B cell (primary cell): ENCODE measurements at regions of chr19 and their contacts with region 1.

Region 1: DNA sequence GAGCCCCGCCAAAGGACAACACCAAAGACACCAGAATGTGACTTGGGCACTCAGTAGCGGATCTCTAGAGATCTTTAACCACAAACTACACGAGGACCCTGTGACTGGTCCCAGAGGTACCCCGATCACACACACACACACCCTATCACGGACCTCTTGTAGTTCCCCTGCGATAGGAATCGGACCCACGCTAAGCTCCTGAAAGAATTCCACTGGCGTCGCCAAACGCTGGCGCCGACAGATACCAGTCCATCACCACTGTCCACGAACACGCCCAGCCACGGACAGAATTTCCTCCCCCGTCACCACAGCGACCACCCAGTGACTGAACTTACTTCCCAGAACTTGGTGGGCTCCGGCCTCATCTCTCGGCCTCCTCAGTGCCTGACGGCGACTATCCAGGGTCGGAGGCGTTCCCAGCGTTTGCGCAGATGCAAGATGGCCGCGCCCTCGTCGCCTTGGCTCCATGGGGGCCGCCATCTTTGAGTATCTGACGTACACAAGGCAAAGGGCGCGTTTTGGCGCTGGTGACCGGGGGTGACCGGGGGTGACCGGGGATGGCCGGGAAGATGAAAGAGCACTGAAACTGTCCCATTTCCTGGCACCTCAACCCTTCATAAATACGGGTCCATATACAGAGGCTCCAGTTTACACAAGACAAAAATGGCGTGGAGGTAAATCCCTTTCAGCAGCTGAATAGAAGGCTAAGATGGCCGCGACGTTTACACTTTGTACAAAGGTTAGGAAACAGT is at the start of gene ZNF615:
- DNase-seq: peak; percentile 94
- ATAC-seq: peak; percentile 94
- H3K4me3 ChIP-seq: peak within 1 kb of the TSS; percentile 68 to 90 (median 76)
- H3K4me3 Mint-ChIP-seq: peak within 1 kb of the TSS; percentile 92
- H3K27ac ChIP-seq: peak within 1 kb of the TSS; percentile 78 to 88
- H3K27ac Mint-ChIP-seq: peak within 1 kb of the TSS; percentile 98
- H3K4me1 ChIP-seq: peaks cover 9 to 12% of the 10 kb centered on the region in 2 donors
- H3K4me1 Mint-ChIP-seq: peaks cover 17% of the 10 kb centered on the region
- H3K27me3 ChIP-seq: no peaks in the 10 kb centered on the region
- H3K27me3 Mint-ChIP-seq: no peaks in the 10 kb centered on the region
- CTCF ChIP-seq: no peak
- total RNA-seq, gene ZNF615: 16.8 and 24.5 TPM in 2 replicates

Region 2: GRCh38 chr19:51751655-51752054 is 256.3 kb before region 1 on chr19 and contains the start of gene FPR1:
- CTCF ChIA-PET with region 1: no interaction called
- POLR2A ChIA-PET with region 1: no interaction called
- intact Hi-C with region 1: no loop called
- DNase-seq: no peak
- ATAC-seq: peak; percentile 94
- H3K4me3 ChIP-seq: peak within 1 kb of the TSS in 1 of 5 experiments; percentile 85
- H3K4me3 Mint-ChIP-seq: peak within 1 kb of the TSS; percentile 41
- H3K27ac ChIP-seq: no peak within 1 kb of the TSS
- H3K27ac Mint-ChIP-seq: peak within 1 kb of the TSS; percentile 77
- H3K4me1 ChIP-seq: peaks cover 0 to 5% of the 10 kb centered on the region in 2 donors
- H3K4me1 Mint-ChIP-seq: peaks cover 14% of the 10 kb centered on the region
- H3K27me3 ChIP-seq: peaks cover 0 to under 1% (median 0%) of the 10 kb centered on the region in 4 experiments
- H3K27me3 Mint-ChIP-seq: peaks cover 9% of the 10 kb centered on the region
- CTCF ChIP-seq: no peak
- total RNA-seq, gene FPR1: 0.17 TPM in 1 of 2 replicates, not detected in the other

Region 3: GRCh38 chr19:51980121-51980743 is 27.8 kb before region 1 on chr19:
- CTCF ChIA-PET with region 1: no interaction called
- POLR2A ChIA-PET with region 1: no interaction called
- intact Hi-C with region 1: no loop called
- DNase-seq: no peak
- ATAC-seq: no peak
- H3K4me3 ChIP-seq: no peak overlapping the region
- H3K4me3 Mint-ChIP-seq: no peak overlapping the region
- H3K27ac ChIP-seq: no peak overlapping the region
- H3K27ac Mint-ChIP-seq: no peak overlapping the region
- H3K4me1 ChIP-seq: peaks cover under 1 to 1% of the 10 kb centered on the region in 2 donors
- H3K4me1 Mint-ChIP-seq: peaks cover 6% of the 10 kb centered on the region
- H3K27me3 ChIP-seq: no peaks in the 10 kb centered on the region
- H3K27me3 Mint-ChIP-seq: no peaks in the 10 kb centered on the region
- CTCF ChIP-seq: no peak

Region 4: GRCh38 chr19:52028027-52028779 is 20.2 kb after region 1 on chr19 and contains the start of gene ZNF614:
- CTCF ChIA-PET with region 1: no interaction called
- POLR2A ChIA-PET with region 1: interaction called, 6 read pairs
- intact Hi-C with region 1: loop called (anchors 1 kb)
- DNase-seq: peak; percentile 93
- ATAC-seq: peak; percentile 85
- H3K4me3 ChIP-seq: peak within 1 kb of the TSS; percentile 91 to 97 (median 93)
- H3K4me3 Mint-ChIP-seq: peak within 1 kb of the TSS; percentile 90
- H3K27ac ChIP-seq: peak within 1 kb of the TSS; percentile 97
- H3K27ac Mint-ChIP-seq: peak within 1 kb of the TSS; percentile 93
- H3K4me1 ChIP-seq: peaks cover 5 to 13% of the 10 kb centered on the region in 2 donors
- H3K4me1 Mint-ChIP-seq: peaks cover 25% of the 10 kb centered on the region
- H3K27me3 ChIP-seq: no peaks in the 10 kb centered on the region
- H3K27me3 Mint-ChIP-seq: no peaks in the 10 kb centered on the region
- CTCF ChIP-seq: no peak
- total RNA-seq, gene ZNF614: 12.3 and 14.3 TPM in 2 replicates

Region 5: GRCh38 chr19:52099497-52100138 is 91.6 kb after region 1 on chr19:
- CTCF ChIA-PET with region 1: no interaction called
- POLR2A ChIA-PET with region 1: no interaction called
- intact Hi-C with region 1: no loop called
- DNase-seq: no peak
- ATAC-seq: no peak
- H3K4me3 ChIP-seq: no peak overlapping the region
- H3K4me3 Mint-ChIP-seq: no peak overlapping the region
- H3K27ac ChIP-seq: no peak overlapping the region
- H3K27ac Mint-ChIP-seq: no peak overlapping the region
- H3K4me1 ChIP-seq: peaks cover 4 to 11% of the 10 kb centered on the region in 2 donors
- H3K4me1 Mint-ChIP-seq: peaks cover 14% of the 10 kb centered on the region
- H3K27me3 ChIP-seq: no peaks in the 10 kb centered on the region
- H3K27me3 Mint-ChIP-seq: no peaks in the 10 kb centered on the region
- CTCF ChIP-seq: no peak

Region 6: DNA sequence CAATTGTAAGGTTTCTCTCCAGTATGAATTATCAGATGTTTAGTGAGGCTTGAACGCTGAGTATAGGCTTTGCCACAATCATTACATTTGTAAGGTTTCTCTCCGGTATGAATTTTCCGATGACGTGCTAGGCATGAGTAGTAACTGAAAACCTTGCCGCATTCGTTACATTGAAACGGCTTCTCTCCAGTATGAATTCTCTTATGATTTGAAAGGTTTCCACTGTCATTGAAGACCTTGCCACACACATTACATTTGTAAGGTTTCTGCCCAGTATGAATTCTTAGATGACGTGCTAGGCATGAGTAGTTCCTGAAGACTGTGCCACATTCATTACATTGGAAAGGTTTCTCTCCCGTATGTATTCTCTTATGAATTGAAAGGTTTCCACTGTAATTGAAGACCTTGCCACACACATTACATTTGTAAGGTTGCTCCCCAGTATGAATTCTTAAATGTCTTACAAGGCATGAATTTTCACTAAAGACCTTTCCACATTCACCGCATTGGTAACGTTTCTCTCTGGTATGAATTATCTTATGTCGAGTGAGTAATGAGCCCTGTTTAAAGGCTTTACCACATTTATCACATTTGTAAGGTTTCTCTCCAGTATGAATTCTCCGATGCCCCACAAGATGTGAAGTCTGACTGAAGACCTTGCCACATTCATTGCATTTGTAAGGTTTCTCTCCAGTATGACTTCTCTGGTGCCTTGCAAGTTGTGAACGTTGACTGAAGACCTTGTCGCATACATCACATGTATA is 147.8 kb after region 1 on chr19:
- CTCF ChIA-PET with region 1: no interaction called
- POLR2A ChIA-PET with region 1: no interaction called
- intact Hi-C with region 1: no loop called
- DNase-seq: no peak
- ATAC-seq: no peak
- H3K4me3 ChIP-seq: peak overlapping the region in 1 of 5 experiments; percentile 26
- H3K4me3 Mint-ChIP-seq: no peak overlapping the region
- H3K27ac ChIP-seq: no peak overlapping the region
- H3K27ac Mint-ChIP-seq: no peak overlapping the region
- H3K4me1 ChIP-seq: no peaks in the 10 kb centered on the region
- H3K4me1 Mint-ChIP-seq: no peaks in the 10 kb centered on the region
- H3K27me3 ChIP-seq: no peaks in the 10 kb centered on the region
- H3K27me3 Mint-ChIP-seq: no peaks in the 10 kb centered on the region
- CTCF ChIP-seq: no peak